ENCODE measurements at regions of chr1 and their contacts with region 1.

Region 1: GRCh38 chr1:32394141-32394889 is at the start of gene BSDC1:
- DNase-seq: peak; percentile 95 to 99 (median 99)
- H3K4me3 ChIP-seq: peak within 1 kb of the TSS; percentile 63 to 100 (median 95)
- H3K27ac ChIP-seq: peak within 1 kb of the TSS; percentile 63 to 96 (median 91)
- H3K27me3 ChIP-seq: no peaks in the 10 kb centered on the region
- CTCF ChIP-seq: peak in 26 of 56 donors; percentile 4 to 61 (median 23)
- total RNA-seq, gene BSDC1: 87.5 to 123 (median 103) TPM

Region 2: GRCh38 chr1:32122151-32122550 is 272.2 kb before region 1 on chr1:
- intact Hi-C with region 1: no loop called
- DNase-seq: no peak
- H3K4me3 ChIP-seq: no peak overlapping the region
- H3K27ac ChIP-seq: no peak overlapping the region
- H3K27me3 ChIP-seq: no peaks in the 10 kb centered on the region
- CTCF ChIP-seq: no peak

Region 3: GRCh38 chr1:32221980-32222755 is 172.1 kb before region 1 on chr1 and contains the starts of genes EIF3I and TMEM234:
- intact Hi-C with region 1: loop called in 1 of 2 experiments (anchors 5 kb)
- DNase-seq: peak; percentile 90 to 96 (median 94)
- H3K4me3 ChIP-seq: peak within 1 kb of the TSS; percentile 61 to 99 (median 90)
- H3K27ac ChIP-seq: peak within 1 kb of the TSS in 57 of 59 donors; percentile 2 to 93 (median 76)
- H3K27me3 ChIP-seq: no peaks in the 10 kb centered on the region
- CTCF ChIP-seq: peak in 8 of 56 donors; percentile 4 to 36 (median 18)
- total RNA-seq, gene EIF3I: 71.7 to 128 (median 95.7) TPM
- total RNA-seq, gene TMEM234: 16.0 to 39.7 (median 25.8) TPM

Region 4: GRCh38 chr1:32266921-32267591 is 127.3 kb before region 1 on chr1:
- intact Hi-C with region 1: no loop called
- DNase-seq: no peak
- H3K4me3 ChIP-seq: no peak overlapping the region
- H3K27ac ChIP-seq: no peak overlapping the region
- H3K27me3 ChIP-seq: no peaks in the 10 kb centered on the region
- CTCF ChIP-seq: no peak

Region 5: DNA sequence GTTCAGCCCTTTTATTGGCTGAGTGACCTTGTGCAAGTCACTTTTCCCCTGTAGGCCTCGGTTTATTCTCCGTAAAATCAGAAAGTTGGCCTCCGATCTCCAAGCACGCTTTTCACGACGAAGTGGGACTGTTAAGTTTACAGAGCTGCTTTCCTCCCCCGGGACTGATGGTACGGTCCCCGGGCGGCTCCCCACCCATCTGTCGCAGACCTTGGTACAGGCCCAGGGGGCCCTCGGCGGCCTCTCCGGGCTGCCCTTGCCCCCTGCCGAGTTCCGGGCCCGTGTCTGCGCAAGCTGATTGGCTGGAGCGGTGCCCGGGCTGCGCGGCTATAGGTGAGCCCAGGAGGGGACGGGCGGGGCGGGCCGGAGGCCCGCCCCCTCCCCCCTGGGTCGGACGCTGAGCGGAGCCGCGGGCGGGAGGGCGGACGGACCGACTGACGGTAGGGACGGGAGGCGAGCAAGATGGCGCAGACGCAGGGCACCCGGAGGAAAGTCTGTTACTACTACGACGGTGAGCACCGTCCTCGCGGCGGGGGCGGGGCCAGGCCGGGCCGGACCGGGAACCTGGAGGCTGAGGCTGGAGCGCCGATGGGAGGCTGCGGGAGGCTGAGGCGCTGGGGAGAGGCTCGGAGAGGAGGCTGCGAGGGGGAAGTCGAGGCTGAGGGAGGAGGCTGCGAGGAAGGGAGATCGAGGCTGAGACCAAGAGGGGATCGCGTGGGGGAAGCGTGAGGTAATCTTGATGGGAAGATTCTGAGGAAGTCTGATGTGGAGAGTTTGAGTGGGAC is 102.4 kb before region 1 on chr1 and contains the start of gene HDAC1:
- intact Hi-C with region 1: no loop called
- DNase-seq: peak; percentile 46 to 90 (median 85)
- H3K4me3 ChIP-seq: peak within 1 kb of the TSS; percentile 45 to 95 (median 80)
- H3K27ac ChIP-seq: peak within 1 kb of the TSS in 56 of 59 donors; percentile 1 to 92 (median 74)
- H3K27me3 ChIP-seq: peaks cover 0 to 5% (median 0%) of the 10 kb centered on the region in 45 donors
- CTCF ChIP-seq: peak in 13 of 56 donors; percentile 2 to 45 (median 12)
- total RNA-seq, gene HDAC1: 16.3 to 56.0 (median 29.8) TPM

Measured in dorsolateral prefrontal cortex (tissue), 120 donors.